CD14-positive monocyte (primary cell): ENCODE measurements at regions of chr17 and their contacts with region 1.

Region 1: DNA sequence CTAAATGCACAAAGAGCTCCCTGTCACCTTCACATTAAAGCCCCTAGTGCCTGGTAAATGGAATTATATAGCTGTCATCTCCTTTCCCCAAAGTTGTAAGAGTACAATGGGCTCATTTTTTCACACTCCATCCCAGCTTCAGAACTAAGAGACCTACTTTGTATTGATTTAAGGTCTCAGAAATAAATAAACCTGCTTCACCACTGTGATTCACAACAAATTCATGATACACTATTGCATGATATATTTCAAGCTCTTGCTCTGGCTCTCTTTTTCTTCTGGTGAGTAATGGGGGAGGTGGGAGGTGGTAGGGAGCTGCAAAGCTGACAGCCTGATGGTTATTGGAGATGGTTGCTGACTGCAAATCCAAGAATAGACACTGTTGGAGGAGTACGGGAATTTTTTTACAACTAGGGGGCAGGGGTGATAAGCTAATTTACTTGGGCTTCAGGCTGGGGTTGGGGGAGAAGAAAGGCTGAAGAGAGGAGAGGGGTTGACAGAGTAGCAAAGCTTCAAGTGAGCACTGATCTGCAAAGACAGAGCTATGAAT is 189.9 kb downstream of the AATF start:
- DNase-seq: no peak
- H3K4me3 ChIP-seq: no peak overlapping the region
- H3K4me3 Mint-ChIP-seq: no peak overlapping the region
- H3K27ac ChIP-seq: no peak overlapping the region
- H3K27ac Mint-ChIP-seq: peak overlapping the region in 1 of 7 donors; percentile 59
- H3K4me1 ChIP-seq: no peaks in the 10 kb centered on the region
- H3K4me1 Mint-ChIP-seq: peaks cover 4% of the 10 kb centered on the region
- H3K27me3 ChIP-seq: no peaks in the 10 kb centered on the region
- H3K27me3 Mint-ChIP-seq: peaks cover 0 to 2% (median 0%) of the 10 kb centered on the region in 3 donors
- CTCF ChIP-seq: no peak

Region 2: DNA sequence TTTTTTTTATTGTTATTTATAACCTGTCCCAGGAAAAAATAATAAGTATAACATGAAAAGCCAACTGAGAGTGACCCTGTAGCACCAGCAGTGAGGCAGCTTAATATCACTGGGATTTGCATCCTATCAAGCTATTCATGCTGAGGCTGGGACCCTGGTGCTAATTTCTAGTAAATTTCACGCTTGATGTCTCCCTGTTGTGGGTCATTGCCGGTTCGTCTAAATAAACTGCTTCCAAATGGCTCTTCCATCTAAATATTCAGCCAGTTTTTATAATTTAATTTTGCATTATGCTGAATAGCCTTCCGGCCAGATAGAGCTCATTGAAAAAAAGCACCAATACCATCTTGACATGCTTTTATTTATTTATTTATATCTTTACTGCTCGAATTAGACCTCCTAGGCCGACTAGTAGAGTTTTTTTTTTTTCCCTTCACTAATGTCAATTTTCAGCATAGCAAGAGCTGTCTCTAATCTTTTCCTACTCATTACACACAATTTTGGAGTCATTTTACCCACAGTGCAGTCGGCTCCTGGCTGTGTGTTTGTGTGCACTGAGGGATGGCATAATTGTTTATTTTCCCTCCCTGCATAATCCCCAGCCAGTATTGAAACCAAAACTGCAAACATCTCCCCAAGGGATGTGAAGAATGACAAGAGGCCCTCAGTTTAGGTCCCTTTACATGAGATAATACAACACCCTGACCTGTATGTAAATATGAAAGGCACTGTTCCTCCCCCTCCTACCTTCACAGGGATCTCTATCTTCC is 21.1 kb before region 1 on chr17:
- intact Hi-C with region 1: loop called in 1 of 2 experiments (anchors 2 kb)
- DNase-seq: no peak
- H3K4me3 ChIP-seq: no peak overlapping the region
- H3K4me3 Mint-ChIP-seq: no peak overlapping the region
- H3K27ac ChIP-seq: no peak overlapping the region
- H3K27ac Mint-ChIP-seq: no peak overlapping the region
- H3K4me1 ChIP-seq: peaks cover 16% of the 10 kb centered on the region in 2 donors
- H3K4me1 Mint-ChIP-seq: peaks cover 21% of the 10 kb centered on the region
- H3K27me3 ChIP-seq: no peaks in the 10 kb centered on the region
- H3K27me3 Mint-ChIP-seq: peaks cover 0 to 4% (median 0%) of the 10 kb centered on the region in 3 donors
- CTCF ChIP-seq: no peak